ENCODE measurements at regions of chr1 and their contacts with region 1.

Region 1: GRCh38 chr1:23126801-23127200 is 41.9 kb downstream of the LUZP1 start:
- DNase-seq: no peak
- H3K4me3 ChIP-seq: no peak overlapping the region
- H3K27ac ChIP-seq: no peak overlapping the region
- H3K4me1 ChIP-seq: peaks cover 34% of the 10 kb centered on the region
- H3K27me3 ChIP-seq: no peaks in the 10 kb centered on the region
- CTCF ChIP-seq: no peak

Region 2: GRCh38 chr1:23044035-23044434 is 82.8 kb before region 1 on chr1:
- CTCF ChIA-PET with region 1: no interaction called
- POLR2A ChIA-PET with region 1: no interaction called
- intact Hi-C with region 1: no loop called
- DNase-seq: no peak
- H3K4me3 ChIP-seq: no peak overlapping the region
- H3K27ac ChIP-seq: peak overlapping the region; percentile 3
- H3K4me1 ChIP-seq: peaks cover 19% of the 10 kb centered on the region
- H3K27me3 ChIP-seq: no peaks in the 10 kb centered on the region
- CTCF ChIP-seq: no peak

Region 3: DNA sequence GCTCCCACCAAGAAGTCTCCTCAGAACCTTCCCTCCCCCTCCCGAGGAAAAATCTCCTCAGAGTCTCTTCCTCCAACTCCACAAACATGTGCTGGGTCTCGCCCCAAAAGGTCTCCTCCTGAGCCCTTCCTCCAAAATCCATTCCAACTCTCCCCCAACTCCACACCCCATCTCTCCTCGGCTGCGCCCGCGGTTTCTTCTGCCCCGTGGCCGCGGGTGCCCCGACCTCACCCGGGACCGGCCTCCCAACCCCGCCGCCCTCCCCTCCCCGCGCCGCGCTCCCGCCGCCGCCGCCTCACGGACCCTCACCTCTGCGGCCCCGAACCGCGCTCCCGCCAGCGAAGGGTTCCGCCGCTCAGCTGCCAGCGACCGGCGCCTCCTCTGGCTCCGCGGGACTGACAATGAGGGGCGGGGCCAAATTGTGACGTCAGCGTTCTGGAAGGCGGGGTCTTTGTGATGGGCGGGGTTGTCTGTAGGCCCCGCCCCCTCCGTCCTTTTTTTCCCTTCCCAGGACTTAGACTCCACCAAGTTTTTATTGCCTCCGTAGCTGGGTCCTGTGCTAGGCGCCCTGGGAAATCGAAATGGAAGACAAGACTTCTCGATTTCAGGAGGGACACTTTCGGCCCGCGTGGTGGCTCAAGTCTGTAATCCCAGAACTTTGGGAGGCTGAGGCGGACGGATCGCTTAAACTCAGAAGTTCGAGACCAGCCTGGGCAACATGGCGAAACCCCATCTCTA is 41.8 kb after region 1 on chr1 and contains the start of gene LUZP1:
- CTCF ChIA-PET with region 1: no interaction called
- POLR2A ChIA-PET with region 1: no interaction called
- intact Hi-C with region 1: loop called (anchors 5 kb)
- DNase-seq: peak; percentile 85
- H3K4me3 ChIP-seq: peak within 1 kb of the TSS; percentile 90
- H3K27ac ChIP-seq: peak within 1 kb of the TSS; percentile 90
- H3K4me1 ChIP-seq: peaks cover 36% of the 10 kb centered on the region
- H3K27me3 ChIP-seq: no peaks in the 10 kb centered on the region
- CTCF ChIP-seq: no peak
- total RNA-seq, gene LUZP1: 32.6 and 34.9 TPM in 2 replicates

Region 4: DNA sequence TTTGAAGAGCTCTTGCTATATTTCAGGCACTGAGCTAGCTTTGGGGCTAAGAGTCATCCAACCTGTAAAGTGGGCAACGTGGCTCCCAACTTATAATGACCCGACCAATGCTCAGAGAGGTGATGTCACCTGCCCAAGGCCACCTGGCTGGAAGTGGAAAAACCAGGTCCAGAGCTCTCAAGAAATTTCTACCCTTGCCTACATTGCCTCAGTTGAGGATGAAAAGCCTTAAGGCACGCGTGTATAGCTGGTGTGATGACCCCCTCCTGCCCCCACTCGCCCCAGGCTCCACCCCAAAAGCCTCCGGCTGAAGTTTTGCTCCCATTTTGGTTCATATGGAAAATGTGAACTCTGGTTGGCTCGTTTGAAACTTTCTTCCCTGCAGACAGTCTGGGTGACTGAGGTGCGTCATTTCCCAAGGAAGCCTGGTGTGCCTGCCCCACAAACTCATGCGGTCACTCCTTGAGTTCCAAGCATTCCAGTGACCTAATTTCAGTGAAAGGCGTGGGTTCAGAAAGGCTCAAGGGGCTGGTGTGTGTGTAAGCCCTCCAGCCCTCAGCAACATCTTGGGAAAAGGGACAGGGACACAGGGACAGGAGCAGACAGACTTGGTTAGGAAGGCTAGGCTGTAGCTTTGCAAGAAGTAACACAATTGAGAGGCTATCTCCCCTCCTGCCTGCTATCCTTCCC is 70.0 kb after region 1 on chr1:
- CTCF ChIA-PET with region 1: no interaction called
- POLR2A ChIA-PET with region 1: no interaction called
- intact Hi-C with region 1: no loop called
- DNase-seq: no peak
- H3K4me3 ChIP-seq: no peak overlapping the region
- H3K27ac ChIP-seq: no peak overlapping the region
- H3K4me1 ChIP-seq: no peaks in the 10 kb centered on the region
- H3K27me3 ChIP-seq: no peaks in the 10 kb centered on the region
- CTCF ChIP-seq: no peak

Measured in A673 (cell line).